PC-9 (cell line): ENCODE measurements at regions of chr12 and their contacts with region 1.

Region 1: GRCh38 chr12:41277116-41277945 is 89.2 kb downstream of the PDZRN4 start:
- DNase-seq: peak in 1 of 2 experiments; percentile 11
- H3K4me3 ChIP-seq: no peak overlapping the region
- H3K27ac ChIP-seq: no peak overlapping the region
- H3K4me1 ChIP-seq: no peaks in the 10 kb centered on the region
- H3K27me3 ChIP-seq: no peaks in the 10 kb centered on the region
- CTCF ChIP-seq: peak; percentile 84

Region 2: GRCh38 chr12:41486718-41487117 is 209.4 kb after region 1 on chr12:
- CTCF ChIA-PET with region 1: no interaction called
- POLR2A ChIA-PET with region 1: no interaction called
- intact Hi-C with region 1: loop called (anchors 10 kb)
- DNase-seq: peak in 1 of 2 experiments; percentile 10
- H3K4me3 ChIP-seq: no peak overlapping the region
- H3K27ac ChIP-seq: no peak overlapping the region
- H3K4me1 ChIP-seq: no peaks in the 10 kb centered on the region
- H3K27me3 ChIP-seq: no peaks in the 10 kb centered on the region
- CTCF ChIP-seq: no peak

Region 3: GRCh38 chr12:41663598-41664258 is 386.4 kb after region 1 on chr12:
- CTCF ChIA-PET with region 1: no interaction called
- POLR2A ChIA-PET with region 1: no interaction called
- intact Hi-C with region 1: loop called (anchors 5 kb)
- DNase-seq: no peak
- H3K4me3 ChIP-seq: no peak overlapping the region
- H3K27ac ChIP-seq: no peak overlapping the region
- H3K4me1 ChIP-seq: no peaks in the 10 kb centered on the region
- H3K27me3 ChIP-seq: no peaks in the 10 kb centered on the region
- CTCF ChIP-seq: peak; percentile 44; the same call in 1 of the 2 replicates

Region 4: GRCh38 chr12:42023733-42024494 is 746.6 kb after region 1 on chr12:
- CTCF ChIA-PET with region 1: interaction called, 4 read pairs
- POLR2A ChIA-PET with region 1: no interaction called
- intact Hi-C with region 1: loop called (anchors 1 kb)
- DNase-seq: peak; percentile 37 to 64
- H3K4me3 ChIP-seq: no peak overlapping the region
- H3K27ac ChIP-seq: no peak overlapping the region
- H3K4me1 ChIP-seq: no peaks in the 10 kb centered on the region
- H3K27me3 ChIP-seq: no peaks in the 10 kb centered on the region
- CTCF ChIP-seq: peak; percentile 87

Region 5: GRCh38 chr12:42104087-42104486 is 826.8 kb after region 1 on chr12:
- CTCF ChIA-PET with region 1: no interaction called
- POLR2A ChIA-PET with region 1: no interaction called
- intact Hi-C with region 1: loop called (anchors 10 kb)
- DNase-seq: no peak
- H3K4me3 ChIP-seq: no peak overlapping the region
- H3K27ac ChIP-seq: no peak overlapping the region
- H3K4me1 ChIP-seq: no peaks in the 10 kb centered on the region
- H3K27me3 ChIP-seq: no peaks in the 10 kb centered on the region
- CTCF ChIP-seq: peak; percentile 35; the same call in 1 of the 2 replicates